CD4-positive, alpha-beta T cell (primary cell): ENCODE measurements at regions of chr19 and their contacts with region 1.

Region 1: DNA sequence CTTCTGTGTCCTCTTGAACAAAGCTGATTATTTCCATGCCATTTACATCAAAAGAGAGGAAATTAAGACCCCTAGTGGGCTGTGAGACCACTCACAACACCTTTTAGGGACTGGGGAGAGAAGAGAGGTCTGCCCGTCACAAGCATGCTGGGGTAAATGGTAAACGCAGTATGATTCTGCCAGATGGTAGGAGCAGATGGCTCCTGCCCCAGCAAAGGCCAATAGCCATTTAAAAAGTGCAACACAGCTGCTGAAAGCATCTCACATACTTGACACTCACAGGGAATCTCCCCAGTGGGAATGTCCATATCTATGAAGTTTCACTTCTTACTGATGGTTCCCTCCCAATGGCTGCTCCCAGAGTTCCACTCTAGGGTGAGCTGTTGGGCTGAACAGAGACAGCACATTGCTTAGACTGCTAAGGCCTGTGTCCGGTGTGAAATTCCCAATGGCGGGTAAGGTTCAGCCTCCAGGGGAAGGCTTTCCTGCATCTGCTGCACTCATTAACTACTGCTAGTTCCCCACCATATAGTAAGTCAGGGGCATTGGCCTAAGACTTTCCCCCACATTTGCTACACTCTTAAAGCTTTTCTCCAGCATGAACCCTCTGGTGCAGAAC is 7.4 kb downstream of the ZNF671 start:
- DNase-seq: no peak
- ATAC-seq: no peak
- H3K4me3 ChIP-seq: no peak overlapping the region
- H3K4me3 Mint-ChIP-seq: no peak overlapping the region
- H3K27ac ChIP-seq: no peak overlapping the region
- H3K27ac Mint-ChIP-seq: no peak overlapping the region
- H3K4me1 ChIP-seq: no peaks in the 10 kb centered on the region
- H3K4me1 Mint-ChIP-seq: peaks cover 5% of the 10 kb centered on the region
- H3K27me3 ChIP-seq: no peaks in the 10 kb centered on the region
- H3K27me3 Mint-ChIP-seq: no peaks in the 10 kb centered on the region
- CTCF ChIP-seq: no peak

Region 2: DNA sequence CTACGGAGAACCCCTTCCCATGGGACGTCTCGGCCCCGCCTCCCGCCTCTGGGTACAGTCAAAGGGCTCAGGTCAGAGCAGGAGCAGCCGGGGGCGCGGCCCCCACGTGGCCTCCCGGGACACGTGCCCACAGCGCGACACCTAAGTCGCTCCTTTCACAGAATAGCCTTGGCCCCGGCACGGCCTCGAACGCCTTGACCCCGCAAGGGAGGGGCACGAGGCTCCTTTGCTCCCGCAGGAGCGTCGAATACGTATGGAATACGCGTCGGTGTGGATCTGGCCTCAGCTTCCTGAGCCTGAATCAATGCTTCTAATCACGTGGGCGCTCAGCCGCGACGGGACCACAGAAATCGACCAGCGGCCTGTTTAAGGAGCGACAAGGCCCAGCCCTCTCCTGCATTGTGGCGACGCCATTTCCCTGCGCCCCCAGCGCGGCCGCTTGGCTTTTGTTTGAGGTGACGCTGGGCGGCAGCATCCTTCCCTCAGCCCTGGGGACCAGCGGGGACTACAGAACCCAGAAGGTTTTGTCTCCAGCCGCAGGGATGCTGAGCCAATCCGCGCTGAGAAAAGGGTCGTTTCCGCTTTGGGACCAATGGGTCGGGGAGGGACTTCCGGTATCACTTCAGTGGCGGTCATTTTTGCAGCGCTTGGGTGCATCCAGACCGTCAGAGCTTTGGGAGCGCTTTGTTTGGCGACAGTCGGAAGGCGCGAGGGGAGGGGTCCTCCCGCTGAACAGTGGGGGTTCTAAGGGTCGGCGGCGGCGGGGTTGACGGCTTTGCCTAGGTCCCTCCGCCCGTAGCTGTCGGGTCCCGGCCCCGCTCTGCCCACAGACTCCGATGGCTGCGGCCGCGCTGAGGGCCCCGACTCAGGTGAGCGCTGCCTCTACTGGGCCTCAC is 136.2 kb before region 1 on chr19 and contains the start of gene ZIK1:
- CTCF ChIA-PET with region 1: no interaction called
- POLR2A ChIA-PET with region 1: no interaction called
- intact Hi-C with region 1: loop called in 1 of 2 experiments (anchors 5 kb)
- DNase-seq: peak; percentile 76 to 96 (median 84)
- ATAC-seq: peak; percentile 87
- H3K4me3 ChIP-seq: peak within 1 kb of the TSS; percentile 83
- H3K4me3 Mint-ChIP-seq: peak within 1 kb of the TSS; percentile 92
- H3K27ac ChIP-seq: peak within 1 kb of the TSS; percentile 26 to 38
- H3K27ac Mint-ChIP-seq: peak within 1 kb of the TSS; percentile 61
- H3K4me1 ChIP-seq: peaks cover 29% of the 10 kb centered on the region
- H3K4me1 Mint-ChIP-seq: peaks cover 23% of the 10 kb centered on the region
- H3K27me3 ChIP-seq: no peaks in the 10 kb centered on the region
- H3K27me3 Mint-ChIP-seq: no peaks in the 10 kb centered on the region
- CTCF ChIP-seq: no peak
- total RNA-seq, gene ZIK1: 6.9 to 7.1 TPM

Region 3: DNA sequence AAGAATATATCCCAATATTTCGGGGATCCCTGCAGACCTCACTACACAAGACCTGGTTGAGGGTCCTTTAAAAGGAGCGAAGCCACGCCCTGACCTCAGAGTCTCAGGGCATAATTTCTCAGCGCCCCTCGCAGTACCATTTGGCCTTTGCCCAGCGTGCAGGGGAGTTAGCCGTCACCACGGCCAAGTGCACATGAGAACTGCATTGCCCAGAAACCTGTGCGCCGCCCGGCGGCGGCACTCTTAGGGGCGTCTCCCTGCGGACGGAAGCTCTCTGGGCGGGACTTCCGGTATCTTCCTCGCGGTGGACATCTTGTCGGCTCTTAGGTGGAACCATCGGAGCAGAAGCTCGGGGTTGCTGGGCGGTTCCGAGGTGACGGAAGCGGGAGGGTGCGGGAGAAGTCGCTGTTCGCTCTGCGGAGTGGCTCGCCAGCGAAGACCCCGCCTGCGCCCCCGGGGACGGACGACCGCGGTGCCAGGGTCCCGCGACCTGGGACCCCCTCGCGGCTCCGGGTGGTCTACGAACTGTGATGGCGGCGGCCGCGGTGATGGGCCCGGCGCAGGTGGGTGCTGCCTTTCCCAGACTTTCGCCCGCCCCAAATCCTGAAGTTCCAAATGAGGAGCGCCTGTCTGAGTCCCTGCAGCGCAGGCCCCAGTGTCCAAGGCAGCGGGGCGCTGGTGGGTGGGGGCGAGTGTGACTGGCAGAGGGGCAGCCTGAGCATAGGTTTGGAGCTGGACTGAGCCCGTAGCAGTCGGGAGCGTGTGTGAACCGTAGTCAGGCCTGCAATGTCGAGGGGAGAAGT is 105.9 kb before region 1 on chr19 and contains the start of gene ZNF134:
- CTCF ChIA-PET with region 1: no interaction called
- POLR2A ChIA-PET with region 1: no interaction called
- intact Hi-C with region 1: loop called in 1 of 2 experiments (anchors 10 kb)
- DNase-seq: peak; percentile 82 to 96 (median 88)
- ATAC-seq: peak; percentile 99
- H3K4me3 ChIP-seq: peak within 1 kb of the TSS; percentile 94
- H3K4me3 Mint-ChIP-seq: peak within 1 kb of the TSS; percentile 95
- H3K27ac ChIP-seq: peak within 1 kb of the TSS; percentile 26 to 50
- H3K27ac Mint-ChIP-seq: peak within 1 kb of the TSS; percentile 82
- H3K4me1 ChIP-seq: peaks cover 26% of the 10 kb centered on the region
- H3K4me1 Mint-ChIP-seq: peaks cover 36% of the 10 kb centered on the region
- H3K27me3 ChIP-seq: no peaks in the 10 kb centered on the region
- H3K27me3 Mint-ChIP-seq: no peaks in the 10 kb centered on the region
- CTCF ChIP-seq: peak; percentile 25
- total RNA-seq, gene ZNF134: 24.6 to 25.7 TPM

Region 4: GRCh38 chr19:57682226-57682766 is 37.7 kb before region 1 on chr19:
- CTCF ChIA-PET with region 1: no interaction called
- POLR2A ChIA-PET with region 1: no interaction called
- intact Hi-C with region 1: loop called in 1 of 2 experiments (anchors 5 kb)
- DNase-seq: no peak
- ATAC-seq: no peak
- H3K4me3 ChIP-seq: peak overlapping the region; percentile 81
- H3K4me3 Mint-ChIP-seq: peak overlapping the region; percentile 98
- H3K27ac ChIP-seq: peak overlapping the region; percentile 29 to 55
- H3K27ac Mint-ChIP-seq: peak overlapping the region; percentile 93
- H3K4me1 ChIP-seq: peaks cover 26% of the 10 kb centered on the region
- H3K4me1 Mint-ChIP-seq: peaks cover 43% of the 10 kb centered on the region
- H3K27me3 ChIP-seq: peaks cover 4 to 8% of the 10 kb centered on the region in 2 experiments
- H3K27me3 Mint-ChIP-seq: peaks cover 14% of the 10 kb centered on the region
- CTCF ChIP-seq: no peak

Region 5: GRCh38 chr19:58002384-58003173 is 282.6 kb after region 1 on chr19 and contains the start of gene ZNF606:
- CTCF ChIA-PET with region 1: no interaction called
- POLR2A ChIA-PET with region 1: no interaction called
- intact Hi-C with region 1: loop called in 1 of 2 experiments (anchors 10 kb)
- DNase-seq: peak; percentile 69 to 93 (median 81)
- ATAC-seq: peak; percentile 96
- H3K4me3 ChIP-seq: peak within 1 kb of the TSS; percentile 95
- H3K4me3 Mint-ChIP-seq: peak within 1 kb of the TSS; percentile 90
- H3K27ac ChIP-seq: peak within 1 kb of the TSS; percentile 71 to 87
- H3K27ac Mint-ChIP-seq: peak within 1 kb of the TSS; percentile 93
- H3K4me1 ChIP-seq: peaks cover 24% of the 10 kb centered on the region
- H3K4me1 Mint-ChIP-seq: peaks cover 23% of the 10 kb centered on the region
- H3K27me3 ChIP-seq: no peaks in the 10 kb centered on the region
- H3K27me3 Mint-ChIP-seq: no peaks in the 10 kb centered on the region
- CTCF ChIP-seq: no peak
- total RNA-seq, gene ZNF606: 11.1 to 13.6 TPM

Region 6: GRCh38 chr19:58278157-58279041 is 558.4 kb after region 1 on chr19 and contains the start of gene ZNF8:
- CTCF ChIA-PET with region 1: no interaction called
- POLR2A ChIA-PET with region 1: no interaction called
- intact Hi-C with region 1: loop called in 1 of 2 experiments (anchors 5 kb)
- DNase-seq: peak; percentile 89 to 99 (median 96)
- ATAC-seq: peak; percentile 96
- H3K4me3 ChIP-seq: peak within 1 kb of the TSS; percentile 89
- H3K4me3 Mint-ChIP-seq: peak within 1 kb of the TSS; percentile 98
- H3K27ac ChIP-seq: peak within 1 kb of the TSS; percentile 81 to 85
- H3K27ac Mint-ChIP-seq: peak within 1 kb of the TSS; percentile 92
- H3K4me1 ChIP-seq: peaks cover 29% of the 10 kb centered on the region
- H3K4me1 Mint-ChIP-seq: peaks cover 45% of the 10 kb centered on the region
- H3K27me3 ChIP-seq: no peaks in the 10 kb centered on the region
- H3K27me3 Mint-ChIP-seq: no peaks in the 10 kb centered on the region
- CTCF ChIP-seq: no peak
- total RNA-seq, gene ZNF8: 9.5 to 9.6 TPM